ENCODE measurements at regions of chr5 and their contacts with region 1.

Region 1: GRCh38 chr5:151126199-151126645 is 31.4 kb downstream of the ANXA6 start:
- DNase-seq: peak; percentile 77
- ATAC-seq: peak; percentile 80
- H3K4me3 Mint-ChIP-seq: no peak overlapping the region
- H3K27ac Mint-ChIP-seq: no peak overlapping the region
- H3K4me1 Mint-ChIP-seq: peaks cover 1% of the 10 kb centered on the region; the same call in 1 of the 2 replicates
- H3K27me3 Mint-ChIP-seq: no peaks in the 10 kb centered on the region
- CTCF ChIP-seq: peak; percentile 86

Region 2: GRCh38 chr5:151101151-151101550 is 25.1 kb before region 1 on chr5:
- CTCF ChIA-PET with region 1: no interaction called
- POLR2A ChIA-PET with region 1: no interaction called
- DNase-seq: no peak
- ATAC-seq: no peak
- H3K4me3 Mint-ChIP-seq: no peak overlapping the region
- H3K27ac Mint-ChIP-seq: no peak overlapping the region
- H3K4me1 Mint-ChIP-seq: peaks cover 2% of the 10 kb centered on the region
- H3K27me3 Mint-ChIP-seq: no peaks in the 10 kb centered on the region
- CTCF ChIP-seq: no peak

Region 3: GRCh38 chr5:151150471-151151262 is 24.4 kb after region 1 on chr5:
- CTCF ChIA-PET with region 1: interaction called, 20 read pairs
- POLR2A ChIA-PET with region 1: interaction called, 5 read pairs
- DNase-seq: no peak
- ATAC-seq: peak; percentile 27
- H3K4me3 Mint-ChIP-seq: no peak overlapping the region
- H3K27ac Mint-ChIP-seq: 0 out of 2 replicates have a peak overlapping the region, but pooled peaks have one; percentile 4
- H3K4me1 Mint-ChIP-seq: peaks cover 21% of the 10 kb centered on the region
- H3K27me3 Mint-ChIP-seq: no peaks in the 10 kb centered on the region
- CTCF ChIP-seq: no peak

Region 4: DNA sequence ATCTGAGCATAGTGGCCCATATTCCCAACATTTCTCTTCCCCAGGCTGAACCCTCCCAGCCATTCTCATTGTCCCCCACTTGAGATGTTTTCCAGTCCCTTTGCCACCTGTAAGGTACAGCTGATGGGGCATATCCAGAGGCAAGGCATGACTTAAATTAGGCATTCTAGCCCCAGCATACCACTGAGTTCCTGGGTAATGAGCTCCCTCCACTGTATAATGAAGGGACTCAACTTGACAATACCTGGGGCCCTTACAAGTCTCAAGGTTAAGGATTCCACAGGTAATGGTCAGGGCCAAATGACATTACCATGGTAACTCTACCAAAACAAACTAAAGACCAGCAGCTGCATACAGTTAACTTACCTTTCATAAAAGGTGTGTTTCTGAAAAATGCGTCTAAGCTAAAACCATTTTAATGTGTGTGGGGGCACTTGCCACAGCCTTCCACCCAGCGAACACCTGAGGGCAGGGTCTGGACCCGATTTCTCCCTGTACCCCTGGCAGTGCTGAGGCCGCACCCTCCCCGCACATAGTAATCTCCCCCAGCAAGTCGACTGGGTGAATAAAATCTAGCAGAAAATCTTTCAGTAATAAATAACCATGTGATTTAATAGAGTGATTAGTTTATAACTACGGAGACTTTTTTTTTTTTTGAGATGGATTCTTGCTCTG is 73.4 kb after region 1 on chr5:
- CTCF ChIA-PET with region 1: no interaction called
- POLR2A ChIA-PET with region 1: no interaction called
- DNase-seq: no peak
- ATAC-seq: no peak
- H3K4me3 Mint-ChIP-seq: no peak overlapping the region
- H3K27ac Mint-ChIP-seq: peak overlapping the region; percentile 42
- H3K4me1 Mint-ChIP-seq: no peaks in the 10 kb centered on the region
- H3K27me3 Mint-ChIP-seq: no peaks in the 10 kb centered on the region
- CTCF ChIP-seq: no peak

Region 5: GRCh38 chr5:151212406-151212841 is 86.2 kb after region 1 on chr5:
- CTCF ChIA-PET with region 1: no interaction called
- POLR2A ChIA-PET with region 1: no interaction called
- DNase-seq: no peak
- ATAC-seq: no peak
- H3K4me3 Mint-ChIP-seq: no peak overlapping the region
- H3K27ac Mint-ChIP-seq: no peak overlapping the region
- H3K4me1 Mint-ChIP-seq: peaks cover 8% of the 10 kb centered on the region
- H3K27me3 Mint-ChIP-seq: no peaks in the 10 kb centered on the region
- CTCF ChIP-seq: no peak

Region 6: GRCh38 chr5:151223469-151224264 is 97.4 kb after region 1 on chr5 and contains the start of gene CCDC69:
- CTCF ChIA-PET with region 1: interaction called, 14 read pairs
- POLR2A ChIA-PET with region 1: no interaction called
- DNase-seq: peak; percentile 79
- ATAC-seq: peak; percentile 91
- H3K4me3 Mint-ChIP-seq: peak within 1 kb of the TSS; percentile 78
- H3K27ac Mint-ChIP-seq: no peak within 1 kb of the TSS
- H3K4me1 Mint-ChIP-seq: peaks cover 25% of the 10 kb centered on the region
- H3K27me3 Mint-ChIP-seq: no peaks in the 10 kb centered on the region; the same call in 1 of the 2 replicates
- CTCF ChIP-seq: no peak
- total RNA-seq, gene CCDC69: 8.2 to 12.4 TPM (median 8.6 TPM) in 3 replicates

Region 7: GRCh38 chr5:151252762-151253604 is 126.8 kb after region 1 on chr5 and contains the start of gene GM2A:
- CTCF ChIA-PET with region 1: interaction called, 17 read pairs
- POLR2A ChIA-PET with region 1: no interaction called
- DNase-seq: peak; percentile 100
- ATAC-seq: peak; percentile 96
- H3K4me3 Mint-ChIP-seq: peak within 1 kb of the TSS; percentile 90
- H3K27ac Mint-ChIP-seq: peak within 1 kb of the TSS; percentile 92
- H3K4me1 Mint-ChIP-seq: peaks cover 35% of the 10 kb centered on the region
- H3K27me3 Mint-ChIP-seq: peaks cover 6% of the 10 kb centered on the region
- CTCF ChIP-seq: no peak
- total RNA-seq, gene GM2A: 33.1 to 36.2 TPM (median 33.2 TPM) in 3 replicates

Region 8: DNA sequence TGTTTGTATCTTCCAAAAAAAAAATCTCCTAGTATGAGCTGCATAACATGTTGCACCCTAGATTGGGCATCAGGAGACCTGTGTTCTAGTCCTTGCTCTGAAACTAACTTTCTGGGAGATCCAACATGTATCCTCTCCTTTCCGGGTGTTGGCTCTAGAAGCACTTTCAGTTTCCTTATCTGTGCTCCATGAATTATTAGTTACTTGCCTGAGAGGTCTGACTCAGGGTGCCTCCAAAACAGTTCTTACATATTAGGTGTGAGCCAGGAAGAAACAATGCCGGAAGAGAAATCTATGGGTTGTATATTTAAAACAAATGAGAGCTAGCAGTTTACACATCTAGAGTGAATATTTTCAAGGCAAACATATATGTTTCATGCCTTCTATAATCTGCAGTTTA is 257.9 kb after region 1 on chr5:
- CTCF ChIA-PET with region 1: no interaction called
- POLR2A ChIA-PET with region 1: no interaction called
- DNase-seq: no peak
- ATAC-seq: no peak
- H3K4me3 Mint-ChIP-seq: no peak overlapping the region
- H3K27ac Mint-ChIP-seq: no peak overlapping the region
- H3K4me1 Mint-ChIP-seq: peaks cover 55% of the 10 kb centered on the region
- H3K27me3 Mint-ChIP-seq: peaks cover 2% of the 10 kb centered on the region; the same call in 1 of the 2 replicates
- CTCF ChIP-seq: no peak

Measured in WTC11 (cell line).